Left ventricle myocardium inferior (tissue), 1 donor: ENCODE measurements at regions of chr14 and their contacts with region 1.

Region 1: GRCh38 chr14:61025251-61026223 is 44.5 kb downstream of the SLC38A6 start:
- DNase-seq: peak; percentile 18
- H3K4me3 ChIP-seq: no peak overlapping the region
- H3K27ac ChIP-seq: no peak overlapping the region
- H3K4me1 ChIP-seq: no peaks in the 10 kb centered on the region
- H3K27me3 ChIP-seq: no peaks in the 10 kb centered on the region
- CTCF ChIP-seq: peak; percentile 93

Region 2: GRCh38 chr14:60622917-60623257 is 402.6 kb before region 1 on chr14:
- intact Hi-C with region 1: loop called (anchors 2 kb)
- DNase-seq: no peak
- H3K4me3 ChIP-seq: no peak overlapping the region
- H3K27ac ChIP-seq: no peak overlapping the region
- H3K4me1 ChIP-seq: no peaks in the 10 kb centered on the region
- H3K27me3 ChIP-seq: peaks cover 68% of the 10 kb centered on the region
- CTCF ChIP-seq: no peak